Head of caudate nucleus (tissue), 42 donors: ENCODE measurements at regions of chr7 and their contacts with region 1.

Region 1: DNA sequence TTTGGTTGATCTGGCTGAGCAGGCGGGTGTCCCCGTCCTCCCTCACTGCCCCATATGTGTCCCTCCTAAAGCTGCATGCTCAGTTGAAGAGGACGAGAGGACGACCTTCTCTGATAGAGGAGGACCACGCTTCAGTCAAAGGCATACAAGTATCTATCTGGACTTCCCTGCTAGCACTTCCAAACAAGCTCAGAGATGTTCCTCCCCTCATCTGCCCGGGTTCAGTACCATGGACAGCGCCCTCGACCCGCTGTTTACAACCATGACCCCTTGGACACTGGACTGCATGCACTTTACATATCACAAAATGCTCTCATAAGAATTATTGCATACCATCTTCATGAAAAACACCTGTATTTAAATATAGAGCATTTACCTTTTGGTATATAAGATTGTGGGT is 26.9 kb upstream of the TRIM56 start:
- DNase-seq: peak in 41 of 42 donors; percentile 19 to 87 (median 55)

Region 2: GRCh38 chr7:100889761-100890634 is 168.4 kb before region 1 on chr7:
- intact Hi-C with region 1: loop called (anchors 5 kb)
- DNase-seq: peak; percentile 86 to 99 (median 96)

Region 3: DNA sequence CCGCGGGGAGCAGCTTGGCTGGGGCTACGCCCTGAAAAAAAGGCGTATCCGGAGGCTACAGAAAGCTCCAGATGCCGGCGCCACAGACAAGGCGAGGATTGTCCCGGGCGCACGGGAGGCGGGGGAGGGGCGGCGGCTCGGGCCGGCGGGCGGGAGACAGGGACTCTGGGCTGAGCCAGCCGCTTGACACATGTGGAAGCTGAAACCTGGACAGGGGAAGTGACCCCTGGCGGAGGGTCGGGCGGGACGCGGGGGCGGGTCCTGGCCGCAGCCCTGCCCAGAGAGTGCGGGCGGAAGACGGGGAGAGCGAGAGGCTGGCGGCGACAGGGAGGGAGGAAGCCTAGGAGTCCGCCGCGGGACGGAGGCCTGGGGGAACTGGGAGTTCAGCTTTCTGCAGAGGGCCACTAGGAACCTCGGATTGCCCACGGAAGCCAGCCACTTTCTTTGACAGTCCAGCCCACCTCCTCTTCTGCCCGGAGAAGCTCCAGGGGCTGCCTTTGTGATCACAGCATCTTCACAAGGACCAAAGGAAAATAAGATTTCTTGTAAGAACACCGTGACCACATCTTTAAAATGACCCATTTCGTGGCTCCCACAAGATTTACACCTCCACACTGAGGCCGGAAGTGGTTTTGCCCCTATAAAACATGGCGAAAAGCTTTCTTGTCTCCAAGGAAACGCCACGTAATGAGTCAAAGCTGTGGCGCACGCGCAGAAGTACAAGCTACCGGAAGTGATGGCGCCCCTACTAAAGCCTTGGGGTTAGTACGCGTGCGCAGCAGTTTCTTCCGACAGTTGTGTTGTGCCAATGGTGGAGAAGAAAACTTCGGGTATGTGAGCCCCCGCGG is 159.3 kb after region 1 on chr7 and contains the starts of genes PLOD3 and ZNHIT1:
- intact Hi-C with region 1: no loop called
- DNase-seq: peak; percentile 88 to 99 (median 95)